ENCODE measurements at regions of chr16 and their contacts with region 1.

Region 1: GRCh38 chr16:67028555-67029248 is at the start of gene CBFB:
- DNase-seq: peak; percentile 95
- ATAC-seq: peak; percentile 94
- H3K4me3 Mint-ChIP-seq: peak within 1 kb of the TSS; percentile 95
- H3K27ac Mint-ChIP-seq: peak within 1 kb of the TSS; percentile 93
- H3K4me1 Mint-ChIP-seq: peaks cover 61% of the 10 kb centered on the region
- H3K27me3 Mint-ChIP-seq: no peaks in the 10 kb centered on the region
- total RNA-seq, gene CBFB: 235 to 241 TPM

Region 2: GRCh38 chr16:67040906-67041305 is 12.2 kb after region 1 on chr16:
- CTCF ChIA-PET with region 1: interaction called, 5 read pairs
- POLR2A ChIA-PET with region 1: interaction called, 35 read pairs
- DNase-seq: no peak
- ATAC-seq: no peak
- H3K4me3 Mint-ChIP-seq: no peak overlapping the region
- H3K27ac Mint-ChIP-seq: no peak overlapping the region
- H3K4me1 Mint-ChIP-seq: peaks cover 36% of the 10 kb centered on the region
- H3K27me3 Mint-ChIP-seq: no peaks in the 10 kb centered on the region

Region 3: DNA sequence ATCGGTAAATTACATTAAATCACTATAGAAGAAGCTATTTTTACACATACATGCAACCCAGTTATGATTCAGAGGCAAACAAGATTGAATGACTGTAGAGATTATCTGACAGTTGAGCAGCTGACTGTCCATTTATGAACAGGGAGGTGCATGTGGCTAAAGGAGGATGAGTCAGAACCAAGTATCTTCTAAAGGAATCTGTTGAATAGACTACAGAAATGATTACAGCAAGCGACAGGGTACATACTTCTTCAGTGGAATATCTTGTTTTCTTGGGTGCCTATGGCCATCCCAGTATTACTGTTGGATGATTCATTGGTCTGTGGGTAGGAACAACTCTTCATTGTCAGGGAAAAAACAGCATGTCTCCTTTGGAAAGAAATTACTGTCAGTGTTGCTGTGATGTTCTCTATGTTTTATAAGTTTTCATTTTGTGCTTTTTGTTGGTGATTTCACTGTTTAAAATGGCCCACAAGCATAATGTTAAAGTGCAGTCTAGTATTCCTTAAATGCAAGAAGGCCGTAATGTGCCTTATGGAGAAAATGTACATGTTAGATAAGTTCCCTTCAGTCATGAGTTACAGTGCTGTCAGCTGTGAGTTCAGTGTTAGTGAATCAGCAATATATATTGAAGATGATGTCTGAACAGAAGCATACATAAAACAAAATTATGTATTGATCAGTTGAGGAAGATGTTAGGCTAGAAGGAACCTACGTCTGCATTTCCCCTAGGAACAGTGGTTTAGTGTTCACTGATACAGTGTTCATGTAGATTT is 27.2 kb after region 1 on chr16:
- CTCF ChIA-PET with region 1: interaction called, 4 read pairs
- POLR2A ChIA-PET with region 1: interaction called, 13 read pairs
- DNase-seq: no peak
- ATAC-seq: no peak
- H3K4me3 Mint-ChIP-seq: no peak overlapping the region
- H3K27ac Mint-ChIP-seq: peak overlapping the region; percentile 61
- H3K4me1 Mint-ChIP-seq: peaks cover 52% of the 10 kb centered on the region
- H3K27me3 Mint-ChIP-seq: no peaks in the 10 kb centered on the region

Region 4: GRCh38 chr16:67104061-67104460 is 75.4 kb after region 1 on chr16:
- CTCF ChIA-PET with region 1: interaction called, 14 read pairs
- POLR2A ChIA-PET with region 1: interaction called, 3 read pairs
- DNase-seq: no peak
- ATAC-seq: no peak
- H3K4me3 Mint-ChIP-seq: no peak overlapping the region
- H3K27ac Mint-ChIP-seq: peak overlapping the region; percentile 35
- H3K4me1 Mint-ChIP-seq: peaks cover 2% of the 10 kb centered on the region
- H3K27me3 Mint-ChIP-seq: no peaks in the 10 kb centered on the region